ENCODE measurements at regions of chr3 and their contacts with region 1.

Region 1: GRCh38 chr3:159169828-159170227 is 368.0 kb downstream of the MFSD1 start:
- DNase-seq: peak; percentile 25
- H3K4me3 Mint-ChIP-seq: no peak overlapping the region
- H3K27ac Mint-ChIP-seq: peak overlapping the region; percentile 96
- H3K4me1 Mint-ChIP-seq: peaks cover 66% of the 10 kb centered on the region
- H3K27me3 Mint-ChIP-seq: no peaks in the 10 kb centered on the region
- CTCF ChIP-seq: no peak

Region 2: GRCh38 chr3:158863247-158863646 is 306.6 kb before region 1 on chr3:
- CTCF ChIA-PET with region 1: no interaction called
- intact Hi-C with region 1: no loop called
- DNase-seq: no peak
- H3K4me3 Mint-ChIP-seq: no peak overlapping the region
- H3K27ac Mint-ChIP-seq: no peak overlapping the region
- H3K4me1 Mint-ChIP-seq: no peaks in the 10 kb centered on the region
- H3K27me3 Mint-ChIP-seq: no peaks in the 10 kb centered on the region
- CTCF ChIP-seq: no peak

Region 3: DNA sequence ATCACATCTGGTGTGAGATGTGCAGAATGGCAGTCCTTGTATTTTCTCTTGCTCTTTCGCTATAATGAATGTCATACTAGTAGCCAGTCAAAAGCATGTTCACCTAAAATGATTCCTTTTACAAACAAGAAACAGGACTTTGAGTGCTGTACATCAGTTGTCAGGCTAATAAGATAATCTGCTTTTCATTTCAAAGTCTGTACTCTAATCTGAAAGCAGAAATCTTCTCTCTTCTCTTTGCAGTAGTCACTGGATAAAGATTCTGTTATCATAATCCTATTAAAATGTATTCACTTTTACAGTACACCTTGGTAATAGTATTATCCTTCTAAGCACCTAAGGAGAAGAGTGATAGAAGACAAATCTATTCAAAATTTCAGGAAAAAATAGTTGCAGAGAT is 67.8 kb before region 1 on chr3:
- CTCF ChIA-PET with region 1: no interaction called
- intact Hi-C with region 1: no loop called
- DNase-seq: no peak
- H3K4me3 Mint-ChIP-seq: no peak overlapping the region
- H3K27ac Mint-ChIP-seq: no peak overlapping the region
- H3K4me1 Mint-ChIP-seq: no peaks in the 10 kb centered on the region
- H3K27me3 Mint-ChIP-seq: no peaks in the 10 kb centered on the region
- CTCF ChIP-seq: no peak

Region 4: DNA sequence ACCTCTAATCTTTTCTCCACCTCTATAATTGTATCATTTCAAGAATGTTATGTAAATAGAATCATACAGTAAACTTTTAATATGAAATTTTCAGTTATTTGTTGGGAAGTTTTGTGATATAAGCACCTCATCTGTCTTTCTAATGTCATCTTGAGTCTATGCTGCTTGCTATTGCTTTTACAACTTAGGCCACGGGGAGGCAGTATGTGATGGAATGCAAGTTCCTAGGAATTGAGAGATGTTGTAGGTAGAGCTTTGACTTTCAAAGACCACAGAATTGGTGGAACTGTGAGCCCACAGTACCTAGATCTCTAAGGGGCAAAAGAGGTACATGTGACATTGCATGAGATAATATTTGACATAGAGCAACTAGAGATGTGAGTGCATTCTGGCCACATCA is 39.7 kb before region 1 on chr3:
- CTCF ChIA-PET with region 1: no interaction called
- intact Hi-C with region 1: loop called (anchors 2 kb)
- DNase-seq: peak; percentile 63
- H3K4me3 Mint-ChIP-seq: no peak overlapping the region
- H3K27ac Mint-ChIP-seq: peak overlapping the region; percentile 25
- H3K4me1 Mint-ChIP-seq: peaks cover 47% of the 10 kb centered on the region
- H3K27me3 Mint-ChIP-seq: no peaks in the 10 kb centered on the region
- CTCF ChIP-seq: peak; percentile 34

Region 5: GRCh38 chr3:159158213-159158612 is 11.6 kb before region 1 on chr3:
- CTCF ChIA-PET with region 1: interaction called, 15 read pairs
- intact Hi-C with region 1: no loop called
- DNase-seq: peak; percentile 75
- H3K4me3 Mint-ChIP-seq: no peak overlapping the region
- H3K27ac Mint-ChIP-seq: peak overlapping the region; percentile 76
- H3K4me1 Mint-ChIP-seq: peaks cover 26% of the 10 kb centered on the region
- H3K27me3 Mint-ChIP-seq: no peaks in the 10 kb centered on the region
- CTCF ChIP-seq: peak; percentile 63

Region 6: DNA sequence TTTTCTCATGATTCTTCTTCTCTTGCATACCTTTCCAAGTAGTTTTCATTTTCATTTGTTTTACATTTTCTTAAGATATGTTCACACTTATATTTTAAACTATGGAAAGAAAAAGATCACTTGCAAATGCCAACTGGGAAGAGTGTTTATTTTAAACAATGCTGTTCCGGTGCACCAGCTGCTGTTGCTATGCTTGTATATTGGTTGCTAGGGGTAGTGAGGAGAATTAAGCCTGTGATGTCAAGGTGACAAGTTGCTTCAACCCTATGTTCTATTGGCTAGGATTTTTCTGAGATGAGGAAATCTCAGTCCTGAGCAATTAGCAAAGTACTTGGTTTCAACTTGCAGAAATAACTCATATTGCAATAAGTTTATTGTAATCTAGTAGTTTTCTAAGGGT is 132.1 kb after region 1 on chr3:
- CTCF ChIA-PET with region 1: no interaction called
- intact Hi-C with region 1: no loop called
- DNase-seq: no peak
- H3K4me3 Mint-ChIP-seq: no peak overlapping the region
- H3K27ac Mint-ChIP-seq: no peak overlapping the region
- H3K4me1 Mint-ChIP-seq: peaks cover 13% of the 10 kb centered on the region
- H3K27me3 Mint-ChIP-seq: no peaks in the 10 kb centered on the region
- CTCF ChIP-seq: no peak

Region 7: GRCh38 chr3:161042023-161042501 is 1872.2 kb after region 1 on chr3:
- CTCF ChIA-PET with region 1: no interaction called
- intact Hi-C with region 1: no loop called
- DNase-seq: peak; percentile 29
- H3K4me3 Mint-ChIP-seq: no peak overlapping the region
- H3K27ac Mint-ChIP-seq: no peak overlapping the region
- H3K4me1 Mint-ChIP-seq: peaks cover 12% of the 10 kb centered on the region
- H3K27me3 Mint-ChIP-seq: no peaks in the 10 kb centered on the region
- CTCF ChIP-seq: no peak

Measured in Calu3 (cell line).